AG04450 (cell line): ENCODE measurements at regions of chr14 and their contacts with region 1.

Region 1: GRCh38 chr14:81605660-81606059 is 72.0 kb upstream of the SEL1L start:
- DNase-seq: no peak
- H3K4me3 ChIP-seq: no peak overlapping the region
- H3K27ac ChIP-seq: no peak overlapping the region
- H3K27me3 ChIP-seq: no peaks in the 10 kb centered on the region
- CTCF ChIP-seq: no peak

Region 2: DNA sequence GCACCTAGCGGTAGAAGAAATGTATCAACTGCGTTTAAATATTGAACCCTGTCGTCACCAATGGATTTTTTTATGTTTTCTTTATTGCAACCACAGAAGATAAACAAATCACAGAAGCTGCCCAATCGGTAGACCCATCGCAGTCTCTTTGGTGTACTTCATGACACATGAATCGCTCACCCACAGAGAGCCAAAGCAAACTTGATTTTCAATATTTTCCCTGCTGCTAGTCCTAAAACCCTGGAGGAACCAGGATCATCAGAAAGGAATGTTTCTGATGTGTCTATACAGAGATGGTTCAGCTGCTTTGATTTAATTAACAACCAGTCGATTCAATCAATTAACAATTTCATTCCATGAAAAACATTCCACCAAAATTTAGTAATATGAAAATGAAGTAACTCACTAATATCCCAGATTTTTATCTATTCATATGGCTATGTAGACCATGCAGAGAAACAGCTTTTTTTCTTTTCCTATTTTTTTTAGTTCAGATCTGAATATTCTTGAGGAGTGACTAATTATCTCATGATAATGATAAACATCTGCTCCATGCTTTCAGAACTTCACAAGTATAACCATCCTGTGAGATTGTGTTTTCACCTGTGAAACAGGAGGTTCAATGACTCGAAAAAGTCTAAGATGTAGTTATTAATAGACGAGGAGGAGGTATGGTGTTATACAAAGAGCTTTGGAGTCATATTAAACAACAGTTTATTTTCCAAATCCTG is 1440.5 kb before region 1 on chr14:
- CTCF ChIA-PET with region 1: interaction called, 10 read pairs
- POLR2A ChIA-PET with region 1: no interaction called
- DNase-seq: peak; percentile 21
- H3K4me3 ChIP-seq: no peak overlapping the region
- H3K27ac ChIP-seq: no peak overlapping the region
- H3K27me3 ChIP-seq: no peaks in the 10 kb centered on the region
- CTCF ChIP-seq: no peak

Region 3: GRCh38 chr14:81436296-81437138 is 169.1 kb before region 1 on chr14:
- CTCF ChIA-PET with region 1: no interaction called
- POLR2A ChIA-PET with region 1: no interaction called
- DNase-seq: no peak
- H3K4me3 ChIP-seq: peak overlapping the region; percentile 56
- H3K27ac ChIP-seq: no peak overlapping the region
- H3K27me3 ChIP-seq: peaks cover 54% of the 10 kb centered on the region
- CTCF ChIP-seq: no peak

Region 4: DNA sequence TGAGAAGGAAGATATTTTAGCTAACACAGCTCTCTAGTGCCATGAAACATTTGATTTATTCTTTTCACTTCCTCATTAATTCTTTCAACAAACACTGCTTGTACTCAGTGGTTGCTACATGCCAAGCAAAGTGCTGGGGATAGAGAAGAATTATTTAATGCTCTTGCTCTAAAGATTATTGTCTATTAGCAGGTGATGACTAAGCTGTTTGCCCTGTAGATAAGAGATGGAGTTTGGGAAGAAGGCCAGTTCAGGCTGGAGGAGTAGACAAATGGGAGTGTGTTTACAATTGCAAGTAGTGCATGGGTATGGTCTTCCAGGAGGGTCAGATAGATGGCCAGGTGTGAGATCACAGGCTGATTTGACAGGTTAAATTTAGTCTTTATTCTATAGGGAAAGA is 27.8 kb after region 1 on chr14:
- CTCF ChIA-PET with region 1: no interaction called
- POLR2A ChIA-PET with region 1: no interaction called
- DNase-seq: no peak
- H3K4me3 ChIP-seq: no peak overlapping the region
- H3K27ac ChIP-seq: no peak overlapping the region
- H3K27me3 ChIP-seq: no peaks in the 10 kb centered on the region
- CTCF ChIP-seq: no peak